ENCODE measurements at regions of chr4 and their contacts with region 1.

Region 1: GRCh38 chr4:40719008-40719623 is 30.6 kb upstream of the NSUN7 start:
- DNase-seq: peak; percentile 71
- ATAC-seq: peak; percentile 88
- H3K4me3 ChIP-seq: no peak overlapping the region
- H3K27ac ChIP-seq: no peak overlapping the region
- H3K4me1 ChIP-seq: peaks cover 26% of the 10 kb centered on the region
- H3K27me3 ChIP-seq: no peaks in the 10 kb centered on the region
- CTCF ChIP-seq: peak; percentile 73 to 91 (median 87)
- EP300 ChIP-seq: no peak
- POLR2A ChIP-seq: no peak
- RAD21 ChIP-seq: peak; percentile 95

Region 2: DNA sequence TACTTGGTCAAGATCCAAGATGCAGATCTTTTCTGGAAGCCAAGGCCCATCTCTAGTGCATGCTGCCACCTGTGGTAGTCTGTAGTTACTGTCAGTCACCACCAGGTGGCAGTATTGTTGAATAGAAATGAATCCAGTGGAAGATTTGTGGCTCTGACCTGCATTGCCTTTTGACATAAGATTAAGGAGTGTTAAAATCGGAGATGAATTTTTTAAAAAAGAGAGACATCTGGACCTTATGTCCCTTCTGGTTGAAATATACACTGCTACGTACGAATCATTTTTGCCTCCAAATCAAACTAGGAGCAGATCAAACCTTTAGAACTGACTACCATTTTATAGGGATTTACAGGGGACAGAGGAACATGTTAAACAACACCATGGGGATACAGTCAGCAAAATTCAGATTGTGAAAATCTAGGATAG is 569.1 kb before region 1 on chr4:
- CTCF ChIA-PET with region 1: interaction called, 7 read pairs
- POLR2A ChIA-PET with region 1: no interaction called
- RAD21 ChIA-PET with region 1: interaction called, 12 read pairs
- SMC1A ChIA-PET with region 1: interaction called, 4 read pairs
- in situ Hi-C with region 1: no loop called
- intact Hi-C with region 1: loop called (anchors 5 kb)
- DNase-seq: peak; percentile 79
- ATAC-seq: peak; percentile 95
- H3K4me3 ChIP-seq: no peak overlapping the region
- H3K27ac ChIP-seq: no peak overlapping the region
- H3K4me1 ChIP-seq: no peaks in the 10 kb centered on the region
- H3K27me3 ChIP-seq: no peaks in the 10 kb centered on the region
- CTCF ChIP-seq: peak; percentile 72 to 85 (median 73)
- EP300 ChIP-seq: no peak
- POLR2A ChIP-seq: no peak
- RAD21 ChIP-seq: peak; percentile 95

Region 3: GRCh38 chr4:40325189-40326019 is 393.7 kb before region 1 on chr4:
- CTCF ChIA-PET with region 1: interaction called, 35 read pairs
- POLR2A ChIA-PET with region 1: no interaction called
- RAD21 ChIA-PET with region 1: interaction called, 21 read pairs
- SMC1A ChIA-PET with region 1: interaction called, 16 read pairs
- in situ Hi-C with region 1: no loop called
- intact Hi-C with region 1: no loop called
- DNase-seq: no peak
- ATAC-seq: peak; percentile 98
- H3K4me3 ChIP-seq: no peak overlapping the region
- H3K27ac ChIP-seq: no peak overlapping the region
- H3K4me1 ChIP-seq: no peaks in the 10 kb centered on the region
- H3K27me3 ChIP-seq: no peaks in the 10 kb centered on the region
- CTCF ChIP-seq: peak; percentile 86 to 94 (median 89)
- EP300 ChIP-seq: no peak
- POLR2A ChIP-seq: no peak
- RAD21 ChIP-seq: peak; percentile 96

Region 4: GRCh38 chr4:40462326-40462725 is 256.8 kb before region 1 on chr4:
- CTCF ChIA-PET with region 1: interaction called, 4 read pairs
- POLR2A ChIA-PET with region 1: interaction called, 5 read pairs
- RAD21 ChIA-PET with region 1: interaction called, 6 read pairs
- SMC1A ChIA-PET with region 1: interaction called, 23 read pairs
- in situ Hi-C with region 1: no loop called
- intact Hi-C with region 1: no loop called
- DNase-seq: peak; percentile 57
- ATAC-seq: peak; percentile 93
- H3K4me3 ChIP-seq: no peak overlapping the region
- H3K27ac ChIP-seq: peak overlapping the region; percentile 61
- H3K4me1 ChIP-seq: peaks cover 27% of the 10 kb centered on the region
- H3K27me3 ChIP-seq: no peaks in the 10 kb centered on the region
- CTCF ChIP-seq: peak in 2 of 3 experiments; percentile 5 to 40; a peak in 3 of 6 replicates
- EP300 ChIP-seq: peak; percentile 48 to 87; a peak in 3 of 4 replicates
- POLR2A ChIP-seq: no peak
- RAD21 ChIP-seq: peak; percentile 51; the same call in 1 of the 2 replicates

Region 5: GRCh38 chr4:40613456-40613855 is 105.7 kb before region 1 on chr4:
- CTCF ChIA-PET with region 1: no interaction called
- POLR2A ChIA-PET with region 1: no interaction called
- RAD21 ChIA-PET with region 1: interaction called, 10 read pairs
- SMC1A ChIA-PET with region 1: interaction called, 7 read pairs
- in situ Hi-C with region 1: no loop called
- intact Hi-C with region 1: no loop called
- DNase-seq: no peak
- ATAC-seq: no peak
- H3K4me3 ChIP-seq: no peak overlapping the region
- H3K27ac ChIP-seq: no peak overlapping the region
- H3K4me1 ChIP-seq: peaks cover 16% of the 10 kb centered on the region
- H3K27me3 ChIP-seq: no peaks in the 10 kb centered on the region
- CTCF ChIP-seq: no peak
- EP300 ChIP-seq: no peak
- POLR2A ChIP-seq: no peak
- RAD21 ChIP-seq: no peak

Region 6: GRCh38 chr4:40672536-40673526 is 46.3 kb before region 1 on chr4:
- CTCF ChIA-PET with region 1: interaction called, 61 read pairs
- POLR2A ChIA-PET with region 1: interaction called, 8 read pairs
- RAD21 ChIA-PET with region 1: interaction called, 36 read pairs
- SMC1A ChIA-PET with region 1: interaction called, 55 read pairs
- in situ Hi-C with region 1: no loop called
- intact Hi-C with region 1: loop called (anchors 2 kb)
- DNase-seq: peak; percentile 98
- ATAC-seq: peak; percentile 83
- H3K4me3 ChIP-seq: peak overlapping the region; percentile 24; the same call in 1 of the 2 replicates
- H3K27ac ChIP-seq: peak overlapping the region; percentile 86
- H3K4me1 ChIP-seq: peaks cover 41% of the 10 kb centered on the region
- H3K27me3 ChIP-seq: no peaks in the 10 kb centered on the region
- CTCF ChIP-seq: no peak
- EP300 ChIP-seq: peak; percentile 88 to 92
- POLR2A ChIP-seq: no peak
- RAD21 ChIP-seq: no peak

Region 7: GRCh38 chr4:40736910-40737309 is 17.8 kb after region 1 on chr4:
- CTCF ChIA-PET with region 1: interaction called, 12 read pairs
- POLR2A ChIA-PET with region 1: no interaction called
- RAD21 ChIA-PET with region 1: interaction called, 11 read pairs
- SMC1A ChIA-PET with region 1: interaction called, 15 read pairs
- in situ Hi-C with region 1: no loop called
- intact Hi-C with region 1: no loop called
- DNase-seq: no peak
- ATAC-seq: peak; percentile 84
- H3K4me3 ChIP-seq: no peak overlapping the region
- H3K27ac ChIP-seq: no peak overlapping the region
- H3K4me1 ChIP-seq: no peaks in the 10 kb centered on the region
- H3K27me3 ChIP-seq: no peaks in the 10 kb centered on the region
- CTCF ChIP-seq: peak; percentile 43 to 68 (median 47); a peak in 5 of 6 replicates
- EP300 ChIP-seq: no peak
- POLR2A ChIP-seq: no peak
- RAD21 ChIP-seq: peak; percentile 94

Measured in GM12878 (cell line).